ENCODE measurements at regions of chr11 and their contacts with region 1.

Region 1: DNA sequence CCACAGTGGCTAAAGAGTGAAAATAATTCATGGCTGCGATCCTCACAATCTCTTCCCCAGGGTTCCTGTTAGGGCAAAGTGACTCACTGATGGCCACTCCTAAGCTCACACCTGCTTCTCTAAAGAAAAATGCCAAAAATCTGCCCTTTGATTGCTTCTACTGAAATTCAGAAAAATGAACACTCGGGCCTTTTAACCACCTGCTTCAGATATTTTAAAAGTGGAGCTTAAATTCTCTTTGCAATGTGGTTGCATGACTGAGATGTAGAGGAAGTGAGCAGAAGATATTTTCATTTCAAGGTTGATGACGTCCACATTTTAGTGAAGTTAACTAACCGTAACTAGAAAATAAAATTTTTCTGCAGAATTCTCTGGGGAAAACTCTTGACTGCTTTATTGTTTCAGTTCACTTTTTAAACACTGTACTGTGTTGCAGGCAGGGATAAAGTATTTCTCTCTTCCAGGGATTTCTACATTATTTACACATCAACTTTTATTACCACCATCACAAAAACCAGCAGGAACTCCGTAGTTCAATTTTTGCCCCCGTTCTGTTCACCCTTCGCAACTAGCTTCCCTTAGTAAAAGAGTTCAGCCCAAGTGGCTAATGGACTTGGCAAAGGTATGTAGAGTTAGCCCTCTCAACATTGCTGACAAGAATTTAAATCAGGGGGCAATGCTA is 8.5 kb downstream of the RAB30 start:
- DNase-seq: no peak
- H3K4me3 Mint-ChIP-seq: peak overlapping the region; percentile 78
- H3K27ac Mint-ChIP-seq: peak overlapping the region; percentile 93
- H3K4me1 Mint-ChIP-seq: peaks cover 64% of the 10 kb centered on the region
- H3K27me3 Mint-ChIP-seq: no peaks in the 10 kb centered on the region

Region 2: DNA sequence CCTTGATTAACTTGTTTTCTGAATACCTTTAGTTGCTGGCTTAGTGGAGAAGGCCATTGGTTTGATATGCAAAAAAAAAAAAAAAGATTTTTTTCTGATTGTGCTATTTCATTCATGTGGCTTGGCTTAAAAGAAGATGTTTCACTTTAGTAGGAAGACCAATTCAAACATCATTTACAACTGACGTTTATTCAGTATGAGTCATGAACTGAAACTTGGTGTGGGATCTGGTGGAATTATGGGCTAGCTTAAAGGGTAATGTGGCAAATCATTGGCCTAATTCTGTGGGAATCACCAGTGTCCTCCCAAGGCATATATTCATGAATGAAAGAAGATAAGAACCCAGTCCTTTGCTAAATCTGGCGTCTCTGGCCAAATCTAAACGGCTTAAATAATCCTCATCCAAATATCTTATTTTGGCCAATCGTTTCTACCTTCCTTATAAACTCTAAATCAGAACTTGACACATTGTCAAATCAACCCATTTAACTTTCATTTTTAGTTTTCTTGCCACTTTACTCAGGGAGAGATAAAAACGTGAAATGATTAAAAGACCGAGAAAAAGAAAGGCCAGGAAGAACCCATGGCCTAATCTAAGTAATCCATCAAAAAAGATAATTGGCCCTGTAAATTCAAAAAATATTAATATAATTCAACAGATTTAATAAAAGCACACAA is 84.7 kb before region 1 on chr11:
- CTCF ChIA-PET with region 1: no interaction called
- intact Hi-C with region 1: loop called (anchors 1 kb)
- DNase-seq: no peak
- H3K4me3 Mint-ChIP-seq: peak overlapping the region; percentile 0
- H3K27ac Mint-ChIP-seq: peak overlapping the region; percentile 33
- H3K4me1 Mint-ChIP-seq: peaks cover 51% of the 10 kb centered on the region
- H3K27me3 Mint-ChIP-seq: no peaks in the 10 kb centered on the region

Region 3: DNA sequence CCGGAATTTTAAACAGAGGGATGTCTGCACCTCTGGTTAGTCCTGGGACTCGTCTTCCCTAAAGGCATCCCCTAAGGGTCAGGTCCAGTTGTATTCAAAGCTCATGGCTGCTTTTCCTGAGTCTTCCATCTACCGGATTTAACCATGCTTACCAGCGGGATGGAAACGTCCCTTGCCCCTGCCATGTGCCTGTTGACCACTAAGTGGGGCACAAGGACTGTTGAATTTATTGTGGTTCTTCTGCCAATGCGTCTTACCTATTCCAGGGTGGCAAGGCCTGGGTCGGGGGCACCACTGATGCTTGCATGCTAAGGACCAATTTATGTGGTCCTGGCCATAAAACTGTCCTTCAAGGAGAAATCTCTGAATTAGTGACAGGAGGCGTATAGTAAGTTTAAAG is 155.9 kb after region 1 on chr11:
- CTCF ChIA-PET with region 1: no interaction called
- intact Hi-C with region 1: no loop called
- DNase-seq: no peak
- H3K4me3 Mint-ChIP-seq: no peak overlapping the region
- H3K27ac Mint-ChIP-seq: no peak overlapping the region
- H3K4me1 Mint-ChIP-seq: no peaks in the 10 kb centered on the region
- H3K27me3 Mint-ChIP-seq: no peaks in the 10 kb centered on the region

Measured in activated naive CD4-positive, alpha-beta T cell treated with anti-CD3 and anti-CD28 coated beads for 36 hours (primary cell).